PC-9 (cell line): ENCODE measurements at regions of chr19 and their contacts with region 1.

Region 1: GRCh38 chr19:48271531-48272151 is 1.8 kb downstream of the ZNF114 start:
- DNase-seq: peak; percentile 66 to 75
- H3K4me3 ChIP-seq: peak overlapping the region; percentile 79
- H3K27ac ChIP-seq: peak overlapping the region; percentile 99
- H3K4me1 ChIP-seq: peaks cover 25% of the 10 kb centered on the region
- H3K27me3 ChIP-seq: no peaks in the 10 kb centered on the region
- CTCF ChIP-seq: no peak

Region 2: GRCh38 chr19:48025480-48025879 is 246.2 kb before region 1 on chr19:
- CTCF ChIA-PET with region 1: no interaction called
- POLR2A ChIA-PET with region 1: no interaction called
- intact Hi-C with region 1: no loop called
- DNase-seq: no peak
- H3K4me3 ChIP-seq: no peak overlapping the region
- H3K27ac ChIP-seq: no peak overlapping the region
- H3K4me1 ChIP-seq: no peaks in the 10 kb centered on the region
- H3K27me3 ChIP-seq: peaks cover 70% of the 10 kb centered on the region
- CTCF ChIP-seq: no peak

Region 3: GRCh38 chr19:48194041-48194871 is 77.4 kb before region 1 on chr19:
- CTCF ChIA-PET with region 1: interaction called, 15 read pairs
- POLR2A ChIA-PET with region 1: no interaction called
- intact Hi-C with region 1: no loop called
- DNase-seq: no peak
- H3K4me3 ChIP-seq: no peak overlapping the region
- H3K27ac ChIP-seq: no peak overlapping the region
- H3K4me1 ChIP-seq: no peaks in the 10 kb centered on the region
- H3K27me3 ChIP-seq: no peaks in the 10 kb centered on the region
- CTCF ChIP-seq: peak; percentile 65

Region 4: DNA sequence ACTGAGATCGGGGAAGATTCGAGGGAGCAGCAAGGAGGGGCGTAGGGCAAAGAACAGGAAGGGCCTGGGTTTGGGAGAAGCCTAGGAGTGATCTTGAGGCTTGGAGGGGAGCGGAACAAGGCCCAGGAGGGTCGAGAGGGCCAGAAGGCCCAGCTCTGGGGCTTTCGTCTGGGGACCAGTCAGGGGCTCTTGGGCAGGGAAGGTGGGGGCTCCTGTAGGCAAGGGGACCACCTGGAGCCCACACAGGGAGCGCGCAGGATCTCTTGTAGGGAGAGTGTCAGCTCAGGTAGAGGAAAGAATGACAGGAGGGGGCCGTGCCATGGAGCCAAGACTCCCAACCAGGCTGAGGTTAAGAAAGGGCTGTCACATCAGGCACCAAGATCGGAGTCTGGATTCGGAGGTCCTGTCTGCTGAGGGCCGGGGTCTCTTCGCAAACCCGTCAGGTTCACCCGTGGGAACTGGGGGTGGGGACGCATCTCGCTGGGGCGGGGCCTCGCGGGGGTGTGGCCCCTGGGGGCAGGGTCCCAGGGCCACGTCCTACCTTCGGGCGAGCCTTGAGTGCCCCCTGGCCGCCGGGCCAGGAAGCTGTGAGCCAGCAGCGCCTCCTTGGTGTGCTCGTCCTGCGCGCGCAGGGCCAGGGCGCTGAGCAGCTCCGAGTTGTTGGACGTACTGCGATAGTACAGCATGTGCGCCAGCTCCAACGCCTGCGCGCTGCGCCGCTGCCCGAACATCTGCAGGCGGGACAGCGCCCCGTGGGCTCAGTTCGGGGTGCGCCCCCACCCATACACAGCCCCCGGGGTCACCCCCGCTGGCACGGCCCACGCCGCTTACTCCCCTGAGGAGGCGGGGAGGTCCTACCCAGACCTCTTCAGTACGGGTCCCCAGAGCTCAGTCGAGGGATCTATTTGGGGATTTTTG is 62.1 kb after region 1 on chr19:
- CTCF ChIA-PET with region 1: interaction called, 19 read pairs
- POLR2A ChIA-PET with region 1: interaction called, 3 read pairs
- intact Hi-C with region 1: loop called (anchors 1 kb)
- DNase-seq: peak; percentile 87 to 91
- H3K4me3 ChIP-seq: peak overlapping the region; percentile 55
- H3K27ac ChIP-seq: peak overlapping the region; percentile 68
- H3K4me1 ChIP-seq: peaks cover 16% of the 10 kb centered on the region
- H3K27me3 ChIP-seq: no peaks in the 10 kb centered on the region
- CTCF ChIP-seq: peak; percentile 87

Region 5: GRCh38 chr19:48480183-48480557 is 208.5 kb after region 1 on chr19:
- CTCF ChIA-PET with region 1: no interaction called
- POLR2A ChIA-PET with region 1: no interaction called
- intact Hi-C with region 1: no loop called
- DNase-seq: no peak
- H3K4me3 ChIP-seq: no peak overlapping the region
- H3K27ac ChIP-seq: no peak overlapping the region
- H3K4me1 ChIP-seq: no peaks in the 10 kb centered on the region; the same call in none of the 2 replicates
- H3K27me3 ChIP-seq: no peaks in the 10 kb centered on the region
- CTCF ChIP-seq: no peak

Region 6: GRCh38 chr19:48513289-48514122 is 241.9 kb after region 1 on chr19:
- CTCF ChIA-PET with region 1: no interaction called
- POLR2A ChIA-PET with region 1: interaction called, 11 read pairs
- intact Hi-C with region 1: no loop called
- DNase-seq: peak; percentile 62 to 68
- H3K4me3 ChIP-seq: peak overlapping the region; percentile 83
- H3K27ac ChIP-seq: no peak overlapping the region
- H3K4me1 ChIP-seq: no peaks in the 10 kb centered on the region; the same call in 1 of the 2 replicates
- H3K27me3 ChIP-seq: no peaks in the 10 kb centered on the region
- CTCF ChIP-seq: no peak

Region 7: DNA sequence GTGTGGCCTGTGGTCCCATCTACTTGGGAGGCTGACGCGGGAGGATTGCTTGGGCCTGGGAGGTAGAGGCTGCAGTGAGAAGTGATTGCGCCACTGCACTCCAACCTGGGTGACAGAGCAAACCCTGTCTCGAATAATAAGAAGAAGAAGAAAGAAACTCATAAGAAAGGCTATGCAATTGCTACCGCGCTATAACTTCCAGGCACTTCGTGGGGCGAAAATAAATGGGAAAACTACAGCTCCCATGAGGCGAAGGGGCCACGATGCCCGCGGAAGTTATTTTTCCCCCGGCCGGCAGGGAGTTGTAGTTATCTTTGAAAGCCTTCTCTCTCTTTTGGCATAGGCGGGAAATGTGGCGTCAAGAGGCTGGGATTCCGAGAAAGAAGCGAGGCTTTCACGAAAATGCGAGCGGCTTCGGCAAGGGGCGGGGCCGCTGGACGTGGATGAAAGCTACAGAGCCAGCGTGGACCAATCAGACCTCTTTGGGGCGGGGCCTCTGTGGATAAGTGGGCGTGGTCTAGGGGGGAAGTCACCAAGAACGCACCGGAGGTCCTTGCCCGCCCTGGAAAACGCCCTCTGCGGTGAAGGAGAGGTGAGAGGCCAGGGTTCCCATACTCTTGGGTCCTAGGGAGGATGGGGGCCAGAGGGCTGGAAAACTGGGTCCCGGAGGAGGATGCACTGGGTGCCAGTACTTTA is 628.3 kb after region 1 on chr19 and contains the start of gene NUCB1:
- CTCF ChIA-PET with region 1: interaction called, 21 read pairs
- POLR2A ChIA-PET with region 1: no interaction called
- intact Hi-C with region 1: no loop called
- DNase-seq: peak; percentile 97 to 98
- H3K4me3 ChIP-seq: peak within 1 kb of the TSS; percentile 98
- H3K27ac ChIP-seq: peak within 1 kb of the TSS; percentile 67
- H3K4me1 ChIP-seq: peaks cover 15% of the 10 kb centered on the region
- H3K27me3 ChIP-seq: no peaks in the 10 kb centered on the region
- CTCF ChIP-seq: no peak
- total RNA-seq, gene NUCB1: 185 and 216 TPM in 2 replicates